ENCODE measurements at regions of chr20 and their contacts with region 1.

Region 1: GRCh38 chr20:52127309-52127708 is 64.3 kb downstream of the ZFP64 start:
- DNase-seq: no peak
- H3K4me3 ChIP-seq: no peak overlapping the region
- H3K27ac ChIP-seq: no peak overlapping the region
- H3K4me1 ChIP-seq: no peaks in the 10 kb centered on the region
- H3K27me3 ChIP-seq: no peaks in the 10 kb centered on the region
- CTCF ChIP-seq: no peak
- EP300 ChIP-seq: no peak
- POLR2A ChIP-seq: no peak
- RAD21 ChIP-seq: no peak

Region 2: DNA sequence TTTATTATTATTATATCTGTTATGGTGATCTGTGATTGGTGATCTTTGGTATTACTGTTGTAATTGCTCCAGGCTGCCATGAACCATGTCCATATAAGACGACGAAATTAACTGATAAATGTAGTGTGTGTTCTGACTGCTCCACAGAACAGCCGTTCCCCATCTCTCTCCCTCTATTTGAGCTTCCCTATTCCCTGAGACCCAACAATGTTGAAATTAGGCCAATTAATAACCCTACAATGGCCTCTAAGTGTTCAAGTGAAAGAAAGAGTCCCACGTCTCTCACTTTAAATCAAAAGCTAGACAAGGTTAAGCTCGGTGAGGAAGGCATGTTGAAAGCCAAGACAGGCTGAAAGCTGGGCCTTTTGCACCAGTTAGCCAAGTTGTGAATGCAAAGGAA is 12.7 kb after region 1 on chr20:
- CTCF ChIA-PET with region 1: interaction called, 10 read pairs
- POLR2A ChIA-PET with region 1: interaction called, 3 read pairs
- DNase-seq: no peak
- H3K4me3 ChIP-seq: no peak overlapping the region
- H3K27ac ChIP-seq: no peak overlapping the region
- H3K4me1 ChIP-seq: no peaks in the 10 kb centered on the region
- H3K27me3 ChIP-seq: no peaks in the 10 kb centered on the region
- CTCF ChIP-seq: no peak
- EP300 ChIP-seq: no peak
- POLR2A ChIP-seq: no peak
- RAD21 ChIP-seq: no peak

Region 3: DNA sequence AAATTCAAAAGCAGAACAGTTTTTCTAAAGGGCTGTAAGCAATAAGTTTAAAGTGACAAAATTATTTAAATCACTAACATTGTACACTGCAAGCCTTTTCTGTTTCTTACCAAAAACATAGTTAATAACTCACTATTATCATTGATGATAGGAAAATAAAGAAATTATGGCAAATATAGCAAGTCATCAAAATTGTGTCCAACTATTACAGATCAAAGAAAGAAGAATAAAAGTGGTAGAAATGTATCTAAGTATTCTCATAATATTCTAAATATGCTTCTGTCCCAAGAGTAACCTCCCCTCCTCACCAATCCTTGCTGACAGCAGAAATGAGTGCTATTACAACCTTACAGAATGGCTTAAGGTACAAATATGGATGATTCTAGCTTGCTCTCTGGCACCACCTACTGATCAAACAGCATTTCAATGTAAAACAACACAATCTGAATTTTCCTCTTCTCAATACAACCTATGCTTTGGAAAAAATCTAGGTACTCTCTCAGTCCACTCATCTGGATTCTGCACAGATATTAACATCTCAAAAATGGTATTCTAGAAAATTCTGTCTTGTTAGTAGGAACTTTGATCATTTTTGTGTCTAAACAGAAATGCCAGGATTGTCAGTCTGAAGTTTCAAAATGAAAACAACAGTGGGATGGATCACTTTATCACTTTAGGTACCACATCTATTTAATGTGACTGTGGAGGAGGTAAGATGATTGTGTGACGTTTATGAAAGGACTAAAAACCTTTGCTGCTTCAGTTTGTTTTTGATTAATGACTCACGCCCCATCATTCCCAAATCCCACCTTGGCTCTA is 23.3 kb after region 1 on chr20:
- CTCF ChIA-PET with region 1: interaction called, 12 read pairs
- POLR2A ChIA-PET with region 1: no interaction called
- DNase-seq: no peak
- H3K4me3 ChIP-seq: no peak overlapping the region
- H3K27ac ChIP-seq: no peak overlapping the region
- H3K4me1 ChIP-seq: no peaks in the 10 kb centered on the region
- H3K27me3 ChIP-seq: no peaks in the 10 kb centered on the region
- CTCF ChIP-seq: peak in 2 of 3 experiments; percentile 51 to 78; a peak in 2 of 4 replicates
- EP300 ChIP-seq: no peak
- POLR2A ChIP-seq: no peak
- RAD21 ChIP-seq: peak; percentile 66 to 68